Gastrocnemius medialis (tissue), 4 donors: ENCODE measurements at regions of chr9 and their contacts with region 1.

Region 1: DNA sequence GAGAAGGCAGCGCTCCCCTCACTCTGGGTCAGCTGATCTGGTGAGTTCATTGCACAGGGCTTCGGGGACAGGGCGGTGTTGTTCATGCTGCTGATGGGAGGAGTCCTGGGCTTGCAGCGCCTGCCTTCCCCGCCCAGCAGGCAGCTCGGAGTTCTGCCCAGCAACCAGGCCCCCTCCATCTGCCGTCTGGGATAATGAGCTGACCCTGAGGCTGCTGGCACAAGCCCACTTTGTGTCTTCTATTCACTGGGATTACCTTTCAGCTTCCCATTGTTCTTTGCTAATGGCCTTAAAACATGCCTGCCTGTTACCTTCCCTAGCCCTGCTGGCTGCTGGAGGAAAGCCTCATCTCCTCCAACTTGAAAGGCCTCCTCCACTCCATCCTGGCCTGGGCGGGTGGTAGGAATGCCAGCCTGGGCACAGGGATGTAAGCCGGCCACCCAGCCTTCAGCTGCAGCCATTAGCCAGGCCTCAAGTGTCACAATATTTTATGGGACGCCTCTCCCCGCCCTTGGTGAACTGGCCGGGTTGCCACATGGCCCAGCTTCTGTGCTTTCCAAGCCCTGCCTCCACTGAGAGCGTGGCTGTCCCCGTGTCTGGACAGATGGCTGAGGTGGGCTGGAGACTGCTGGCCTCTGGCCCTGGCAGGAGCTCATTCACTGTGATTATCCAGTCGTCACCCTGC is 70.4 kb downstream of the GADD45G start:
- DNase-seq: peak; percentile 81 to 92
- ATAC-seq: peak; percentile 80 to 88
- H3K4me3 ChIP-seq: no peak overlapping the region
- H3K27ac ChIP-seq: peak overlapping the region; percentile 73 to 84 (median 84)
- H3K4me1 ChIP-seq: peaks cover 40 to 43% of the 10 kb centered on the region in 2 donors
- H3K27me3 ChIP-seq: no peaks in the 10 kb centered on the region
- CTCF ChIP-seq: no peak
- POLR2A ChIP-seq: no peak

Region 2: DNA sequence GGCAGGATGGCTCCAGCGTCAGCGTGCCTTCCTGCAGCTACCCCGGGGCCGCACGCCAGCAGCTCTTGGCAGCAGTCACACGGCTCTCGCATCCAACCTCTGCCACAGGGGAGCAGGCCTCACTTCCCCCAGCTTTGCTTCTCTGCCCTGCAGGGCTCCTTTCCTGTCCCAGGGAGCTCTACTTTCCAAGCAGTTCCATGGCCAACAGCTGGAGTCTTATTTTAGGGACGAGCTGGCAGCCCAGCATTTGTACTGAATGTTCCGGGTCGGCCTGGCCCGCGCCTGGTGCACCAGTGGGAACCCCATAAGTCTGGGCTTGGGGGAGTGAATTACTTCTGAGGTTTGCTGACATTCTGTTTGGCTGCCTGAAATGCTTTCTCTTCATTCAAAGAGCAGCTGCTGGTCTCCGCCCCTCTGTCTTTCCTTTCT is 35.8 kb before region 1 on chr9:
- in situ Hi-C with region 1: no loop called
- intact Hi-C with region 1: loop called (anchors 1 kb)
- DNase-seq: peak; percentile 88 to 95
- ATAC-seq: peak; percentile 87 to 88
- H3K4me3 ChIP-seq: peak overlapping the region; percentile 47 to 58 (median 48)
- H3K27ac ChIP-seq: peak overlapping the region; percentile 85 to 93 (median 90)
- H3K4me1 ChIP-seq: peaks cover 57 to 63% of the 10 kb centered on the region in 2 donors
- H3K27me3 ChIP-seq: no peaks in the 10 kb centered on the region
- CTCF ChIP-seq: peak in 2 of 5 experiments; percentile 33 to 45
- POLR2A ChIP-seq: peak; percentile 32 to 43